CD4-positive, alpha-beta memory T cell (primary cell): ENCODE measurements at regions of chr1 and their contacts with region 1.

Region 1: GRCh38 chr1:110460253-110461220 is 9.6 kb downstream of the PROK1 start:
- DNase-seq: peak; percentile 78 to 84 (median 83)
- H3K4me3 ChIP-seq: no peak overlapping the region
- H3K4me3 Mint-ChIP-seq: no peak overlapping the region
- H3K27ac ChIP-seq: no peak overlapping the region
- H3K27ac Mint-ChIP-seq: no peak overlapping the region
- H3K4me1 ChIP-seq: no peaks in the 10 kb centered on the region
- H3K4me1 Mint-ChIP-seq: no peaks in the 10 kb centered on the region
- H3K27me3 ChIP-seq: no peaks in the 10 kb centered on the region
- H3K27me3 Mint-ChIP-seq: peaks cover 0 to 2% of the 10 kb centered on the region in 2 donors

Region 2: DNA sequence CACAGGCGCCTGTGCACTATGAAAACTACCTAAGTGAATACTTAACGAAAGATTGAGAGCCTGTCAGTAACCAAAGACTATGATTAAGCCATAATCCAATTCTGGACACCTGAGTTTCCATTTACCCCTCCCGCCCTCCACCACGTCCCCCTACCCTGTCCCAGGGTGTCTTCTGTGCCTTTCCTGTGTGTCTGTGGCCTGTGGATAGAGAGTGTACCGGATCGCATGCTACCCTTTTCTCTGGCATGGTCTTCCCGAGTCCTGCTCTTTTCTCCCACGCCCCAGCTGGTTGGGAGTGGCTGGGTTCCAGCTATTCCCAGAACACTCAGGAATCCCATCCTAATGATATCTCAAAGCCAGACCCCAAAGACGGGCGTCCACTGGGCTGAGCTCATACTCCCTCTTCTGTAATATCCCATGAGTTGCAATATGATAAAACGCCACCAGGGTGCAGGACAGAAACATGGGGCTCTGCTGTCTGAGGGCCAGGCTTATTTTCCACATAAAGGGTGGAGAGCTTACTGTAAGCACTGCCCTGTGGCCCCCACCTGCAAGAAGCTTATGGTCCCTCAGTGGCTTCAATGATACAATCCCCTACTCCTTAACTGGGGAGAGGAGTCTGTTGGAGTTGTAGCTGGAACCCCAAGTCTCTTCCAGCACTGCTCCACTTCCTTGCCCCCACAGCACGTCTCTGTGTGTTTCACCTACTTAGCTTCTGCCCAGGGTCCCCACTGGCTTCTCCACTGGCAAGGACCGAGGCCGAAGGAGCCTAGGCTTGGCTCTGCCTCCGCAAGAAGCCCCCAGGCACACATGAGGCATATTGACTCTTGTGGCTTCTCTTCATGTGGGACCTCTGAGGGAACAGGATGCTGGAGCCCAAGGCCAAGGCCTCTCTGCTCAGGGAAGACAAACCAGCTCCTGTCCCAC is 372.5 kb before region 1 on chr1:
- CTCF ChIA-PET with region 1: interaction called, 18 read pairs
- POLR2A ChIA-PET with region 1: interaction called, 3 read pairs
- intact Hi-C with region 1: no loop called
- DNase-seq: peak in 2 of 5 donors; percentile 42 to 46
- H3K4me3 ChIP-seq: no peak overlapping the region
- H3K4me3 Mint-ChIP-seq: peak overlapping the region in 1 of 8 donors; percentile 55
- H3K27ac ChIP-seq: no peak overlapping the region
- H3K27ac Mint-ChIP-seq: no peak overlapping the region
- H3K4me1 ChIP-seq: peaks cover 12% of the 10 kb centered on the region
- H3K4me1 Mint-ChIP-seq: peaks cover 9 to 22% (median 11%) of the 10 kb centered on the region in 4 donors
- H3K27me3 ChIP-seq: peaks cover 24% of the 10 kb centered on the region
- H3K27me3 Mint-ChIP-seq: peaks cover 31 to 44% of the 10 kb centered on the region in 2 donors

Region 3: DNA sequence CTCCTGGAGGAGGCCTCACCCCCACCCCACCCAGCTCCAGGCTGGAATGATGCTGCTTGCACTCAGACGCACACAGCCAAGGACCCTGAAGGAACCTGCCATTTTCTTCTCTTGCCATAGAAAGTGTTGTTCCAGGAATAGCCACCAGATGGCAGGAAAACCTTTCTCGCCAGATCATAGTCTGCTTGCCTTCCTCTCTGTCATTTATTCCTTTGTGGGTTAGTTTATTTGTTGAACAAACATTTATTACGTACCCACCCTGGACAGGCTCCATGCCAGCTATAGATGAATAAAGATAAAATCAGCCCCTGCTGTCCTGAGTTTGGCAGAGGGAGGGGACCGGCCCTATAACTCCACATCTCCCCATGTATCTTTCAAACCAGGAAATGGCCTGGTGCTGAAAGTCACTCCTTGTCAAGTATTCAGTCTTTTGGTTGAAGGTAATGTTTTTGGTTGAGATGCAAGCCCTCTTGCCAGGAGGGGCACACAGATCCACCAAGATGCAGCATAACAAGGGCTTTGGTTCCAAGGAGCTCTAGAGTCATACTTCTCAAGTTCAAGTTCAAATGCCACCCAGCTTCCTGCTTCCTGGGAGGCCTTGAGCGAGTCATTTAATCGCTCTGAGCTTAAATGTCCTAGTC is 257.4 kb before region 1 on chr1:
- CTCF ChIA-PET with region 1: interaction called, 234 read pairs
- POLR2A ChIA-PET with region 1: interaction called, 14 read pairs
- intact Hi-C with region 1: loop called (anchors 1 kb)
- DNase-seq: peak; percentile 75 to 82 (median 78)
- H3K4me3 ChIP-seq: no peak overlapping the region
- H3K4me3 Mint-ChIP-seq: peak overlapping the region in 3 of 8 donors; percentile 2 to 44 (median 34)
- H3K27ac ChIP-seq: no peak overlapping the region
- H3K27ac Mint-ChIP-seq: peak overlapping the region; percentile 48 to 93 (median 83)
- H3K4me1 ChIP-seq: peaks cover 19% of the 10 kb centered on the region
- H3K4me1 Mint-ChIP-seq: peaks cover 13 to 31% (median 20%) of the 10 kb centered on the region in 4 donors
- H3K27me3 ChIP-seq: no peaks in the 10 kb centered on the region
- H3K27me3 Mint-ChIP-seq: no peaks in the 10 kb centered on the region

Region 4: DNA sequence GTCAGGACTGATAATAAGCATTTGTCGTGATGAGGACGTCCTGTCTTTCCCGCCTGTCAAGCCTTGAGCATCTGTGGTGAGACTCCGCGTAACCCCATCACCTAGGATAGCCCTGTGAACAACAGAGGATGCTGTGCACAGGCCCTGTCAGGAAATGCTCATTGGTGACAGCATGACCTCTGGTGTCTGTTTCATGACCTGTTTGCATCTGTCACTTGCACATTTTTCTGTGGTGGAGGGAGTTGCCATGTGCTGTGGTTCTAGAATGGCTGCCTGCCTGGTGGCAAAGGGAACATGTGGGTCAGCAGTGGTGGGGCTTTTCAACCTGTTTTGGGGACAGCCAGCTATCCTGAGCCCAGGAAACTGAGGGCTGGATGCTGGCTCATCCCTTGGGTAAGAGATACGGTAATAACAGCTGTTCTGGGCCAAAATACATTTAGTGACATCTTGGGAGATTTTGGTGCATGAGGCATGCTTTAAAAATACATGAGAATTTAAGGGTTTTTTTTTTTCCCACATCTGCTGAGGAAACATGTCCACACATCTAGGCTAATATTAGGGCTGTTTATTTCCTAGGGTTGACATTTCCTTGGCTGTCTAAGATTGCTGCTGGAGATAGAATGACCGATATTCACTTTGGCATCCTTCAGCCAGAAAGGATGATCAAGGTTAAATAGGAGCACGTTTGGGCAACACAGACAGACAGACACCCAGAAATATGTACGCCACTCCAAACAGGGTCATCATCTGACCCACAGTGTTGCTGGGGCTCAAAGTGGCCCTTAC is 197.5 kb before region 1 on chr1:
- CTCF ChIA-PET with region 1: no interaction called
- POLR2A ChIA-PET with region 1: no interaction called
- intact Hi-C with region 1: no loop called
- DNase-seq: peak in 2 of 5 donors; percentile 3 to 12
- H3K4me3 ChIP-seq: no peak overlapping the region
- H3K4me3 Mint-ChIP-seq: no peak overlapping the region
- H3K27ac ChIP-seq: no peak overlapping the region
- H3K27ac Mint-ChIP-seq: peak overlapping the region in 2 of 7 donors; percentile 43 to 48
- H3K4me1 ChIP-seq: no peaks in the 10 kb centered on the region
- H3K4me1 Mint-ChIP-seq: no peaks in the 10 kb centered on the region
- H3K27me3 ChIP-seq: peaks cover 3% of the 10 kb centered on the region
- H3K27me3 Mint-ChIP-seq: peaks cover 5 to 11% of the 10 kb centered on the region in 2 donors

Region 5: GRCh38 chr1:110312188-110313121 is 148.1 kb before region 1 on chr1:
- CTCF ChIA-PET with region 1: interaction called, 25 read pairs
- POLR2A ChIA-PET with region 1: no interaction called
- intact Hi-C with region 1: loop called (anchors 1 kb)
- DNase-seq: peak; percentile 67 to 73 (median 70)
- H3K4me3 ChIP-seq: no peak overlapping the region
- H3K4me3 Mint-ChIP-seq: peak overlapping the region in 2 of 8 donors; percentile 32 to 57
- H3K27ac ChIP-seq: no peak overlapping the region
- H3K27ac Mint-ChIP-seq: peak overlapping the region in 2 of 7 donors; percentile 17 to 59
- H3K4me1 ChIP-seq: no peaks in the 10 kb centered on the region
- H3K4me1 Mint-ChIP-seq: peaks cover 0 to 2% (median under 1%) of the 10 kb centered on the region in 4 donors
- H3K27me3 ChIP-seq: no peaks in the 10 kb centered on the region
- H3K27me3 Mint-ChIP-seq: no peaks in the 10 kb centered on the region

Region 6: GRCh38 chr1:110412576-110412975 is 48.0 kb before region 1 on chr1:
- CTCF ChIA-PET with region 1: interaction called, 73 read pairs
- POLR2A ChIA-PET with region 1: no interaction called
- intact Hi-C with region 1: loop called (anchors 1 kb)
- DNase-seq: peak; percentile 52 to 63 (median 56)
- H3K4me3 ChIP-seq: no peak overlapping the region
- H3K4me3 Mint-ChIP-seq: no peak overlapping the region
- H3K27ac ChIP-seq: no peak overlapping the region
- H3K27ac Mint-ChIP-seq: peak overlapping the region in 4 of 7 donors; percentile 5 to 84 (median 49)
- H3K4me1 ChIP-seq: peaks cover 15% of the 10 kb centered on the region
- H3K4me1 Mint-ChIP-seq: peaks cover 10 to 19% (median 13%) of the 10 kb centered on the region in 4 donors
- H3K27me3 ChIP-seq: no peaks in the 10 kb centered on the region
- H3K27me3 Mint-ChIP-seq: no peaks in the 10 kb centered on the region

Region 7: DNA sequence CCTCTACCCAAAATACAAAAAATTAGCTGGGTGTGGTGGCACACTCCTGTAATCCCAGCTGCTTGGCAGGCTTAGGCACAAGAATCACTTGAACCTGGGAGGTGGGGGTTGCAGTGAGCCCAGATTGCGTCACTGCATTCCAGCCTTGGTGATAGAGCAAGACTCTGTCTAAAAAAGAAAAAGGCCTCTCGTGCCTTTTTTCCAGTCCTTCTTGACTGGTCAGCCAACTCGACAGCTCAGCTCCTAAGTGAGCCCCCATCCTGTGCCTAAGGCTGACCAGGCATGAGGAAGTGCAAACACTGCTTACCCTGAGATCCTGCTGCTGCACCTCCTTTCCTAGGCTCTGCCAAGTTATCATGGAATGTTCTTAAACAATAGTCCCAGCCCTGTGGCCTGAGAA is 19.7 kb before region 1 on chr1:
- CTCF ChIA-PET with region 1: interaction called, 16 read pairs
- POLR2A ChIA-PET with region 1: no interaction called
- intact Hi-C with region 1: no loop called
- DNase-seq: no peak
- H3K4me3 ChIP-seq: no peak overlapping the region
- H3K4me3 Mint-ChIP-seq: no peak overlapping the region
- H3K27ac ChIP-seq: no peak overlapping the region
- H3K27ac Mint-ChIP-seq: no peak overlapping the region
- H3K4me1 ChIP-seq: no peaks in the 10 kb centered on the region
- H3K4me1 Mint-ChIP-seq: peaks cover 0 to under 1% (median 0%) of the 10 kb centered on the region in 4 donors
- H3K27me3 ChIP-seq: no peaks in the 10 kb centered on the region
- H3K27me3 Mint-ChIP-seq: peaks cover 4 to 10% of the 10 kb centered on the region in 2 donors